Cardiac septum (tissue), 1 donor: ENCODE measurements at regions of chr11 and their contacts with region 1.

Region 1: GRCh38 chr11:66616379-66617154 is at the start of gene RBM14:
- DNase-seq: peak; percentile 99
- total RNA-seq, gene RBM14: 35.2 TPM

Region 2: DNA sequence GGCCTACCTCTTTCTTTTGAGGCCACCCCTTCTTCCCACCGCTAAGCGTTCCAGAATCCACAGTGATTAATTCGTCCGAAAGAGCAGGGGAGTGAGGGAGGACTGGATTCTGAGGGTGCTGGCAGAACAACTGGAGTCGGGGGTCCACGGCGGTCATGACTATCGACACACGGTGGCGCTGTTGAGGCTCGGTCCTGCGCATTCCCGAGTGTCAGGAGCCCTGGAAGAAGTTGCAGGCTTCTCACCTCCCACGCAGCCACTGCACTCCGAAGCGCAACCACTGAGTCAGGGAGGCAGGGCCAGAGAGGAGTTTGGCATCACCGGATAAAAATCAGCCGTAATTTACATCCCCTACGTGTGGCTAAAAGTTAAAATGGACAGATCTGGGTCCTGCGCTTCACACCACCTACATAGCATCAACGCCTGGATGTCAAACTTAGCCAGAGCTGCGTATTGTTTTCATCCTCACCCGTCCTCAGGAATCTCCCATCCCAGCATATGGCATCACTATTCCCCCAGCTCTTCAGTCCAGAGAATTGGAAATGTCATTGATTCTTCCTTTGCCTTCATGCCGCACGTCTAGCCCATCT is 37.5 kb before region 1 on chr11:
- intact Hi-C with region 1: no loop called
- DNase-seq: peak; percentile 87

Region 3: DNA sequence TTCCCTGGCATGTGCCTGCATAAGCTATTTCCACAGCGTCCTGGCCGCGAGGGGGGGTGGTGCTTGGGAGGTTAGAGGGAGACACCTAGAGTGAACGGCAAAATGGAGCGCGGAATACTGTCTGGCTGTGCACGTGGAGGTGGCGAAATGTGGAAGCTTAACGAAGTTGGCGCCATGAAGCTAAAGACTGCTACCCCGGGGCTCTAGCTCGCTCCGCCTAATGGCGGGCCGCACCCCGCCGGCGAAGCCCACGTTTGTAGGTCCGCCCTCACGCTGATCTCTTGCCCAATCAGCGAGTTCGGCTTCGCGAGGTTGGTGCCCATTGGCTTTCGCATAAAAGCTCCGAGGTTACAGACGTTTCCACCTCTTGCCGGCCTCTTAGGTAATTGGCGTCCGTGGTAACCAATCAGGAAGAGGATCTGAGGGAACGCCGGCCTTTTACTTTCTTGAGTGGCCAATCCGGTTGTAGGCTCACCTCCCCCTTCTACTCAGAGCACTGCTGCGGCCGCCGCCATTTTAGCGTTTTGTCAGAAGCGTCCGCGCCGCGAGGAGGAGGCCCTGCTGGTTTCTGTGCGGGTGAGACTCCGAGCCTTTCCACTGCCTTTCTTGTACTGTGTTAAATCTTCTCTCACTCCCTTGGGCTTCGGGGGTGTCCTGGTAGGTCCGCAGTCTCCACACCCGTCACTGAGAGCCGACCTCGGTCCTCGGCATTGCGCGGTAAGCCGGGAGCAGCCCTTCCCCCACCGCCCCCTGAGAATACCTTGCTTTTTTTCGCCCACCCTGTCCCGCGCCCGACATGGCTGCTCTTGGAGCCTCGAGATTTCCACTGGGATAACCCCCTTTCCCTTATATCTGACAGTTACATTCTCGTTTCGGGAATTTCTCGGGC is 21.9 kb after region 1 on chr11 and contains the start of gene RBM4:
- intact Hi-C with region 1: loop called (anchors 1 kb)
- DNase-seq: peak; percentile 99
- total RNA-seq, gene RBM4: 60.1 TPM

Region 4: DNA sequence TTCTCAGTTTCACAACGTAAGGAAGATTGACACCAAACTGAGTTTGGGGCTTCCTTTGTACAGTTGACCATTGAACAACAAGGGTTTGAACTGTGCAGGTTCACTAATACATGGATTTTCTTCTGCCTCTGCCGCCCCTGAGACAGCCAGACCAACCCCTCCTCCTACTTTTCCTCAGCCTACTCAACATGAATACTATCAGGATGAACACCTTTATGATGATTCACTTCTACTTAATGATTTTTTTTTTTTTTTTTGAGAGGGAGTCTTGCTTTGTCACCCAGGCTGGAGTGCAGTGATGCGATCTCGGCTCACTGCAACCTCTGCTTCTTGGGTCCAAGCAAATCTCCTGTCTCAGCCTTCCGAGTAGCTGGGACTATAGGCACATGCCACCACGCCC is 36.6 kb after region 1 on chr11:
- intact Hi-C with region 1: no loop called
- DNase-seq: no peak